Gastrocnemius medialis (tissue), 4 donors: ENCODE measurements at regions of chr16 and their contacts with region 1.

Region 1: DNA sequence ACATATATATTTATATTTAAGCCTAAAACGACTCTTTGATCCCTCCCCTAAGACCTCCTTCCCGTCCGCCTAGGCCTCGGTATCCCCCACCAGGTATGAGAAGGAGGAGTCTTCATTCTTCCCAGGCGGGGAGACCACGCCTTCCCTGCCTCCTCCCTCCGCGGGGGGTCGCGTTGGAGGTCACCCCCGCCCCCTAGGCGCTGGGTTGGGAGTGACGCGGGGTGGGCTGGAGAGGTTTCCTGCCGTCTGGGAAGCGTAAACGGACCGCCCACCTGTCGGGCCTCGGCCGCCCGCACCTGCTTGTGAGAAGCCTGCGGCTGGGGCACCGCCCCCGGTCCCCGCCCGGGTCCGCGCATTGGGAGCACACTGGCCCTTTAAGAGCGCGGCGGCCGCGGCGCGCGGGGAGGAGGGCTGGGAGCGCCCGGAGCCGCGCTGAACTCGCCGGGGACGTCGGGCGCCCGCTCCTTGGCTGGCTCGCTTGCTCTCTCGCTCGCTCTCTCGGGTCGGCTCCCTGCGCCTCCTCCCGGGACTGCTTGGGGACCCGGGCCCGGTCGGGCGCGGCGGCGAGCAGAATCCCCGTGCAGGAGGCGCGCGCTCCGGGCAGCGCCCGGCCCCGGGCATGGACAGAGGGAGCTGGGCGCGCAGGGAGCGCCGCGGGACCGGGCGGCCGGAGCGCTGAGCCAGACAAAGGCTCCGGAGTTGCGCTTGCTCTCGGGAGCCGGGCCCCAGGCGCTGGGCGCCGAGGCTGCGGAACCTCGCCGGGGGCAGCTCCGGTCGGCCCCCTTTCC is at the start of gene MMP15:
- DNase-seq: peak; percentile 36 to 63
- ATAC-seq: peak; percentile 64 to 70
- H3K4me3 ChIP-seq: peak within 1 kb of the TSS; percentile 66 to 99 (median 70)
- H3K27ac ChIP-seq: peak within 1 kb of the TSS; percentile 73 to 92 (median 91)
- H3K4me1 ChIP-seq: peaks cover 25 to 42% of the 10 kb centered on the region in 2 donors
- H3K27me3 ChIP-seq: no peaks in the 10 kb centered on the region
- CTCF ChIP-seq: no peak
- POLR2A ChIP-seq: peak; percentile 63 to 76
- total RNA-seq, gene MMP15: 2.9 to 8.1 (median 4.9) TPM

Region 2: DNA sequence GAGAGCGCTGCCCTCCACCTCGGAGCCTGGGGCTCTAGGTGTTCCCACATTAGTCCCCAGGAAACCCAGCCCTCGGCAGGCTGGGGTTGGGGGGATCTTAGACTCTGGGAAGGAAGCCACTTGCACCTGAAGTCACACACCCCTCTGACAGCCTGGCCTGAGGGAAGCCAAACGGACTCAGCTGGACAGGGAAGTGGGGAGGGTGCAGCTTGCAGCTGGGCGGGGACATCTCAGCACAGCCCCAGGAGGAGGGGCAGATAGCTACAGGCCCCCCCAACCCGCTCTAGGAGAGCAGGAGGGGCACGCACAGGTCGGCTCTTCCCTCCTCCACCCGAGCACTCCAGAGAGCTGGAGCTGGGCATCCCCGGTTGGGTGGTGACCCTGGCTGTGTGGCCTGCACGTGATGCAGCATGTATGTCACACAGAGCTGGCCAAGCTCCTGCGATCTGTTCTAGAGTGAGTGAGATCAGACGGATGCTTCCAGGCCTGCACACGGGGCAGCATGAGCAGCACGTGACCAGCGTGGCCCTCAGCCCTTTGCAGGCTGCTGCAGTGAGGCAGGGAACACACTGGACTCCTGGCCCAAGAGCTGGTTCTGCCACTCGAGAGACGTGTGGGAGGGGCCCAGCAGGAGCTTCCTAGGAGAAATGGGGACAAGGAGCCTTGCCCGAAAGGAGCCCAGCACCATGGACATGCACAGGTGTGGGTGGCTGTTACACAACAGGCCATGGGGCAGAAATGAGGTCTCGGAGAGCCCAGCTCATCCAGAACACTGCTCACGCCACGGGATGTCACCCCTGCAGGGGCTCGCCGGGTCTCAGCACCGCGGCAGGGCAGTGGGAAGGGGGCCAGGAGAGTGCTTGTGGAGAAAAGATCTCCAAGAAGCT is 238.7 kb before region 1 on chr16:
- in situ Hi-C with region 1: no loop called
- intact Hi-C with region 1: loop called (anchors 5 kb)
- DNase-seq: peak; percentile 77 to 88
- ATAC-seq: peak; percentile 54 to 84
- H3K4me3 ChIP-seq: no peak overlapping the region
- H3K27ac ChIP-seq: peak overlapping the region; percentile 60 to 89 (median 74)
- H3K4me1 ChIP-seq: peaks cover 32 to 38% of the 10 kb centered on the region in 2 donors
- H3K27me3 ChIP-seq: no peaks in the 10 kb centered on the region
- CTCF ChIP-seq: no peak
- POLR2A ChIP-seq: peak in 1 of 2 donors; percentile 38

Region 3: GRCh38 chr16:57925310-57925709 is 100.2 kb before region 1 on chr16:
- in situ Hi-C with region 1: no loop called
- intact Hi-C with region 1: no loop called
- DNase-seq: no peak
- ATAC-seq: no peak
- H3K4me3 ChIP-seq: no peak overlapping the region
- H3K27ac ChIP-seq: no peak overlapping the region
- H3K4me1 ChIP-seq: no peaks in the 10 kb centered on the region
- H3K27me3 ChIP-seq: no peaks in the 10 kb centered on the region
- CTCF ChIP-seq: no peak
- POLR2A ChIP-seq: no peak

Region 4: GRCh38 chr16:57955572-57956188 is 69.9 kb before region 1 on chr16:
- in situ Hi-C with region 1: no loop called
- intact Hi-C with region 1: no loop called
- DNase-seq: no peak
- ATAC-seq: no peak
- H3K4me3 ChIP-seq: no peak overlapping the region
- H3K27ac ChIP-seq: no peak overlapping the region
- H3K4me1 ChIP-seq: no peaks in the 10 kb centered on the region
- H3K27me3 ChIP-seq: no peaks in the 10 kb centered on the region
- CTCF ChIP-seq: no peak
- POLR2A ChIP-seq: no peak

Region 5: DNA sequence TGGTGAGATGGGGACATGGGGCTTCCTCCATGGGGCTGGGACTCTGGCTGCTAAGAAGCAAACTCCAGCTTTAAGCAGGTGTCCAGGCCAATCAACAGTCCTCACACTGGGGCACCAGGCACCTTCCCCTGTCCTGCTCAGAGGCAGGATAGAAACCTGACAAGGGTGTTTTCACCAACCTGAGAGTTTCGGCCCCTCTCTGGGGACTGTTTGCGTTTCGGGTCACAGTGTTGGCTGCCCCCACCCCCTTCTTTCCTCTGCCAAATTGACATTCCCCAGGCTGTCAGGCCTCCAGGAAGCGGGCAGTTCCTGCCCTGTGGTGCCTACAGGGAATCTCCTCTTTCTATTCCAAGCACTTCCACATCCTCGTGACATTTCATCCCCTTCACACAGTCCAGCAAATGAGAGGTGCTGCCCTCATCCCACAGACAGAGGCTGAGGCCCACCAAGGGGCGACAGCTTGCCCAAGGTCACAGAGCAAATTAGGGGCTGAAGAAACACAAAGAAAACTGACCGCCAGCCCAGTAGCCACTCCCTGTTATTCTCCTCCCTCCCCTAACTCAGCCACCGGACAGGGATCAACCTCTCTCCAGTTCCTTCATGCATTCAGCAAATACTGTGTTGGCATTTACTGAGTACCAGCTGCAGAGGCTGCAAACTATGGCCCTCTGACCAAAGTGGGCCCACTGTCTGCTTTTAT is 38.0 kb after region 1 on chr16:
- in situ Hi-C with region 1: no loop called
- intact Hi-C with region 1: no loop called
- DNase-seq: no peak
- ATAC-seq: no peak
- H3K4me3 ChIP-seq: no peak overlapping the region
- H3K27ac ChIP-seq: no peak overlapping the region
- H3K4me1 ChIP-seq: no peaks in the 10 kb centered on the region
- H3K27me3 ChIP-seq: no peaks in the 10 kb centered on the region
- CTCF ChIP-seq: no peak
- POLR2A ChIP-seq: no peak

Region 6: DNA sequence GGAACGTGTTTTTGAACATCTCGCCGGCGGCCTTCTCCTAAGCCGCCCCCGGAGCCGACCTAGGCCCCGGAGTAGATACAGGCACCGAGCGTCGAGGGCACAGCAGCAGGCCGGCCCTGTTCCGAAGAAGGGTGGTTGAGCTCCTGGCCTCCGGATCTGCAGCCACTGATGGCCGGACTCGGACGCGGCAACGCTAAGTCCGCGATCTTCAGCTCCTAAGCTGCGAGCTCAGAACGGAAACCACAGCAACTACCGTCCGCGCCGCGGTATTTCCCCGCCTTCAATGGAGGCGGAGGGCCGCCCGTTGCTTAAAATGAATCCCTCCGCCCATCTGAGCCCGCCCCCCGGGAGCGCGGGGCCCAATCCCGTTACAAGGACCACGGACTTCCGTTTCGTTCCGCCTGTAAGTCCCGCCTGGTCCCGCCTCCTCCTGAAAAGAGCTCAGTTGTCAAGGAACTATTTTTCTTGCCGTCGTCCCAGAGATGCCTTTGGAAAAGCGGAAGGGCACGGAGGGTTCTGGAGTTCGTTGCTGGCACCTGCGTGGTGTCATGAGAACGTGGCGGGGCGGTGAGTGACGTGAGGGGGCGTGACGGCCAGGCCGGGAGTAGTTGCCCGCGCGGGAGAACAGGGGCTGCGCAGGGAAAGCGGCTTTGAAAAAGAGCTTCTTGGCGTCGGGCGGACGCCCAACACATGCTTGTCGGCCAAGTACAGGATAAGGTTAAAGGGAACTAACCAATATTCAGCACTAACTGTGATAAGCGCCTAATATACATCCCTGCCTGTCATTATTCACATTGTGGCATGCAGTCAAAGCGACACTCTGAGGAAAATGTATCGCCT is 103.8 kb after region 1 on chr16 and contains the start of gene CFAP20:
- in situ Hi-C with region 1: loop called (anchors 5 to 10 kb)
- intact Hi-C with region 1: loop called (anchors 1 kb)
- DNase-seq: peak; percentile 99
- ATAC-seq: peak; percentile 99 to 100
- H3K4me3 ChIP-seq: peak within 1 kb of the TSS; percentile 84 to 92 (median 88)
- H3K27ac ChIP-seq: peak within 1 kb of the TSS; percentile 86 to 91 (median 90)
- H3K4me1 ChIP-seq: peaks cover 25 to 31% of the 10 kb centered on the region in 2 donors
- H3K27me3 ChIP-seq: no peaks in the 10 kb centered on the region
- CTCF ChIP-seq: peak in 2 of 5 experiments; percentile 15 to 16
- POLR2A ChIP-seq: peak; percentile 83 to 96
- total RNA-seq, gene CFAP20: 6.5 to 16.0 (median 9.1) TPM

Region 7: DNA sequence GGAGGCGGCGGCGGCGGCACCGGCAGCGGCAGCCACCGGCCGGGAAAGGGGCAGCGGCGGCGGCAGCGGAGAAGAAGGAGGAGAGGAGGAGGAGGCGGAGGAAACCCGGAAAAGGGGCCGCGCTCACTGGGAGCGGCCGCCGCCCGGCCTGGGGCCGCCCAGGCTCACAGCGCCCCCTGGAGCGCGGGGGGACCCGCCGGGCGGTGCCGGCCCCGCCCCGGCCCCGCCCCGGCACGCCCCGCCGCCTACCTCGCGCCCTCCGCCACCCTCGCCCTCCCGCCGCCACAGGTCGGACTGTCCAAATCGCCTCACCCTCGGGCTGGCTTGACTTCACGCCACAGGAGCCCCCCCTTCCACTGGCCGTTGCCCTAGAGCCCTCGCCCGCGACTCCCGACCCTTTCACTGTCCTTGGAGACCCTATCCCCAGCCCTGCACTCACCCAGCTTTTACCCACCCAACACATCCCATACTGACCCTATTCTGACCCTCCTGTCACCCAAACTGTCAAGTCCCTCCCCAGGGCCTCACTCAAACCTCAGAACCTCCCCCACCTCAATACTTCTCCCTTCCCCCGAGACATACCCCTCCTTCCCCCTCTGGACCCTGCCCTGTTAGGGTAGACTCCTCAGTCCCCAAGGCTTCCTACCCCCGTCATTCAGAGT is 172.6 kb after region 1 on chr16 and contains the start of gene CSNK2A2:
- in situ Hi-C with region 1: no loop called
- intact Hi-C with region 1: loop called (anchors 5 kb)
- DNase-seq: peak; percentile 25 to 52
- ATAC-seq: peak; percentile 91 to 92
- H3K4me3 ChIP-seq: peak within 1 kb of the TSS; percentile 67 to 85 (median 78)
- H3K27ac ChIP-seq: peak within 1 kb of the TSS in 3 of 4 donors; percentile 59 to 65 (median 61)
- H3K4me1 ChIP-seq: peaks cover 9% of the 10 kb centered on the region in 2 donors
- H3K27me3 ChIP-seq: no peaks in the 10 kb centered on the region
- CTCF ChIP-seq: peak in 4 of 5 experiments; percentile 30 to 56 (median 42)
- POLR2A ChIP-seq: peak; percentile 27 to 33
- total RNA-seq, gene CSNK2A2: 14.0 to 29.5 (median 20.4) TPM

Region 8: DNA sequence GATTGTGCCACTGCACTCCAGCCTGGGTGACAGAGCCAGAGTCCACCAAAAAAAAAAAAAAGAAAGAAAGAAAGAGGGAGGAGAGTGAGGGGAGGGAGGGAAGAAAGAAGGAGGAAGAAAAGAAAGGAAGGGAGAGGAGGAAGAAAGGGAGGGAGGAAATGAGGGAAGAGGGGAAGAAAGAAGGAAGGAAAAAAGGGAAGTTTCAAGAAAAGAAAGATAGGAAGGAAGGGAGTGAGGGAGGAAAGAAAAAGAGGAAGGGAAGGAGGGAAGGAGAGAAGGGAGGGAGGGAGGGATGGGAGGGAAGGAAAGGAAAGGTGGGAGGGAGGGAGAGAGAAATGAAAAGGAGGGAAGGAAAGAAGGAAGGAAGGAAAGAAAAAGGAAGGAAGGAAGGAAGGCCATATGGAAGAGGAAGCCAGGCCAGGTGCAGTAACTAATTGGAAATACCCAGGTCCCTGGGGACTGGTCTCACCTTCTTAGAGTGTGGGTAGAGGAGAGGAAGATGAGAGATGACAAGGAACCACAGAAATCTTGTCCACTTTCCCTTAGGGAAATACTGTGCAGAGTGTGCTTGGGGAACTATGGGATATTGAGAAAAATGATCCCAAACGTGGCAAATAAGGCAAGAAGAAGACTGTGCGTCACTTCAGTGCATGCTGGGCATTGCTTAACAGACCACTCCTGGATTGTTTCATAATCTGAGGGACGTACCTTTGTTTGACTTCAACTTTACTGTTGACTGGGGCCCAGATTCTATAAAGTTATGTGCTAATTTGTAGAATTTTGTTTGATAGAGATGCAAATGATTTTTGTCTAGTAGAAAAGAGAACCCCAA is 187.5 kb after region 1 on chr16:
- in situ Hi-C with region 1: no loop called
- intact Hi-C with region 1: no loop called
- DNase-seq: no peak
- ATAC-seq: no peak
- H3K4me3 ChIP-seq: no peak overlapping the region
- H3K27ac ChIP-seq: no peak overlapping the region
- H3K4me1 ChIP-seq: no peaks in the 10 kb centered on the region
- H3K27me3 ChIP-seq: no peaks in the 10 kb centered on the region
- CTCF ChIP-seq: no peak
- POLR2A ChIP-seq: no peak